ENCODE measurements at regions of chr18 and their contacts with region 1.

Region 1: DNA sequence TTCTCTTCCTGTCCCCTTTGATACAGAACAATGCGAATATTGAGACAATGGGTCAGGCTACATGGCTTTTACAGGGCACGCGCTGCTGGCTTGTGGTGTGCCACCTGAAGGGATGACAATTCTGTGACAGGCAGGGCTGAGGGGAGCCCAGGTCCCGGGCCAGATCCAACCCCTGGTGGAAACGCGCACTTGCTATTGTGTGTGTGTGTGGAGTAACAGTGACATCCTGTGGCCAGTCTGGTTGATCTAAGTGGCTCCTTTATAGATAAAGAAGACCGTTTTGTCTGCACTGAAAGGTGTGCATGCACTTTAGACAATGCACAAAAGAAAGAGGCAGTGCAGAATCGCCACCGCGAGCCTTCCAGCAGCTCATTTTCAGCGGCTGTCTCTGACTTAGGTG is 273.6 kb downstream of the HRH4 start:
- DNase-seq: no peak
- ATAC-seq: peak in 2 of 4 donors; percentile 48 to 50
- H3K4me3 ChIP-seq: no peak overlapping the region
- H3K27ac ChIP-seq: no peak overlapping the region
- H3K4me1 ChIP-seq: no peaks in the 10 kb centered on the region
- H3K27me3 ChIP-seq: peaks cover 0 to 7% (median 2%) of the 10 kb centered on the region in 4 donors
- CTCF ChIP-seq: no peak

Region 2: DNA sequence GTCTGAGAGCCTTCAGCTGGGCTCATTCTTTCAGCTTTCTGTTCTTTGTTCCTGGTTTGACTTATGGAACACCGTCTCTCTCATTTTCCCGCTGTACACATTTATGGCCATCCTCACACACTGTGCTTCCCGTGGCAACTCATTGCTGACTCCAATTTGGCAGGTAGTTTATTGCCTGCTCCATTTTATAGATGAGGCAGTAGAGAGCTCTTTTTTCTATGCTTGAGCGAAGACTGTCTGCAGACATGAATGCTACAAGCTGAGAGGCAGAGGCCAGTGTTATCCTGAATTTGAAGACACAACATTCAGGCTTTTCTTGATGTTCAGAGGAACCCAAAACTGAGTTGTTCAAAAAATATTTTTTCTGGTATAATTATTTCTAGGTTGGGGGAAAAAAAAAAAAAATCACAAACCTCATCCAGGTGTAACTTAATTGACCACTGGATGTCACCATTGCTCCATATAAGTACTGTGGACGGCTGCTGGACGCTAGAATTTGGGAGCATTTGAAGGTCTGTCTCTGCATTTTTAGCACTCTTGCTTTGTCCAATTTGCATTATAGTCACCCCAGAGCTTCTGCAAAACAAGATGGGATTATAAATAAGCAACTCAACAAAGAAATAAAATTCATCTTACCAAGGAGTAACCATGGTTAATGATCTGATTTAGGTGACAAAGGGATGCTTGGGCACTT is 190.1 kb before region 1 on chr18:
- intact Hi-C with region 1: loop called in 1 of 3 experiments (anchors 10 kb)
- DNase-seq: no peak
- ATAC-seq: peak in 3 of 4 donors; percentile 45 to 55 (median 54)
- H3K4me3 ChIP-seq: no peak overlapping the region
- H3K27ac ChIP-seq: no peak overlapping the region
- H3K4me1 ChIP-seq: no peaks in the 10 kb centered on the region
- H3K27me3 ChIP-seq: no peaks in the 10 kb centered on the region
- CTCF ChIP-seq: peak in 1 of 4 donors; percentile 14

Region 3: GRCh38 chr18:24600076-24600654 is 133.9 kb before region 1 on chr18:
- intact Hi-C with region 1: loop called in 2 of 3 experiments (anchors 10 kb)
- DNase-seq: peak in 1 of 6 donors; percentile 12
- ATAC-seq: peak in 3 of 4 donors; percentile 48 to 52 (median 50)
- H3K4me3 ChIP-seq: no peak overlapping the region
- H3K27ac ChIP-seq: no peak overlapping the region
- H3K4me1 ChIP-seq: no peaks in the 10 kb centered on the region
- H3K27me3 ChIP-seq: peaks cover 0 to 3% (median 0%) of the 10 kb centered on the region in 4 donors
- CTCF ChIP-seq: peak in 2 of 4 donors; percentile 25 to 42

Measured in pancreas (tissue), 10 donors.